AG04449 (cell line): ENCODE measurements at regions of chr5 and their contacts with region 1.

Region 1: GRCh38 chr5:144142139-144142823 is 28.2 kb downstream of the YIPF5 start:
- DNase-seq: no peak
- H3K4me3 ChIP-seq: no peak overlapping the region
- CTCF ChIP-seq: peak; percentile 60

Region 2: GRCh38 chr5:143824851-143825720 is 317.2 kb before region 1 on chr5:
- CTCF ChIA-PET with region 1: interaction called, 24 read pairs
- POLR2A ChIA-PET with region 1: no interaction called
- DNase-seq: no peak
- H3K4me3 ChIP-seq: no peak overlapping the region
- CTCF ChIP-seq: peak; percentile 96

Region 3: GRCh38 chr5:143968011-143968878 is 174.0 kb before region 1 on chr5:
- CTCF ChIA-PET with region 1: interaction called, 32 read pairs
- POLR2A ChIA-PET with region 1: no interaction called
- DNase-seq: no peak
- H3K4me3 ChIP-seq: no peak overlapping the region
- CTCF ChIP-seq: peak; percentile 38

Region 4: DNA sequence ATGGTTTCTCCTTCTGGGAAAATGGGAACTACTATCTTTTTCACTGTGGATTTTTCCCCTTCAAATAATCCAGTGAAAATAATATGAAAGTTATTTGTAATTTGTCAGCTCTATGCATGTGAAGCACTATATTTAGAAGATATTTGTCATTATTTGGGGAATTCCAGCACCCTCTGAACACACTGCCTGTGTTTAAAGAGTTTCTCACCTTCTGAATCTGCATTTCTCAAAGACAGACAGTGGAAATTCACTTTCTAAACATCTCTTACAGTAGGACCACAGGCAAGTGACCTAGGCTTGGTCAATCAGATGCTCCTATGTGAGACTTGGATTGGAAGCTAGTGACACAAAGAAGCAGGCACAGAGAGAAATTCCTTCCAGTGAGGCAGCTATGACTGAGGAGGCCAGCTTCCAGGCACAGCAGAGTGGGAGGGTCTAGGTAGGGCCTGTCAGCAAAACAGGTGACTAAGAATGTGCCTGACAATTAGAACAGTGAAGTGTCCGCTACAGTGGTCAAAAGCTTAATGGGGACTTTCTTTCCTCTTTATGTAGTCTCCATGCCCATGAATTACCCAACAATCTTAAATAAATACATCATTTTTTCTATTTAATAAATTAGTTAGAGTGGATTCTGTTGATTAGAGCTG is 163.1 kb before region 1 on chr5:
- CTCF ChIA-PET with region 1: interaction called, 15 read pairs
- POLR2A ChIA-PET with region 1: no interaction called
- DNase-seq: no peak
- H3K4me3 ChIP-seq: no peak overlapping the region
- CTCF ChIP-seq: no peak

Region 5: DNA sequence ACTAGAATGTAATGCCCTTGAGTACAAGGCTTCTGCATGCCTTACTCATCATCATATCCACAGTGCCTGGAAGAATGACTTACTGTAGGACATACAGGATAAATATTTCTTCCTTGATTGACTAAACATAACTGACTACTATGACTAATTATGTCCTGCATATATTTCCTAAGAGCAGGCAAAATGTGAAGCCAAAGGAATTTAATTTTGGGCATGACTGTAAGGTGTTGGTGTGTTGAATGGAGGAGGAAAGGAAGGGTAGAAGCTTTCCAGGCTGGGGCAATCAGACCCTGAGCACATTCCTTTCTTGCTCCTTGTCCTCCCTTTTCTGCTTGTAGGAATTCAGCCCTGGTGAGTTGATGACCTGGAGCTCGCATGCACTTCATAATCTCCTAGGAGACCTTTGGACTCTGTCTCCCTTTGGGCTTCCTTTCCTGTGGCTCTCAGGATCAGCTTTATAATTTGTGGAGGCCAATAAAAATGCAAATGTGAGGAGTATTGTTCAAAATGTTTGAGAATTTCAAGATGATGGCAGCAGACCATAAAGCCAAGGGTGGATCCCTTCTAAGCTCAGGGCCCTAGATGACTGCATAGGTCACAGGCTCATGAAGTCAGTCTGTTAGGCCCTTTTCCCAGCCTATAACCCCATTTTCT is 156.3 kb before region 1 on chr5:
- CTCF ChIA-PET with region 1: interaction called, 10 read pairs
- POLR2A ChIA-PET with region 1: interaction called, 3 read pairs
- DNase-seq: peak; percentile 34
- H3K4me3 ChIP-seq: no peak overlapping the region
- CTCF ChIP-seq: no peak

Region 6: GRCh38 chr5:144125163-144125726 is 17.0 kb before region 1 on chr5:
- CTCF ChIA-PET with region 1: interaction called, 36 read pairs
- POLR2A ChIA-PET with region 1: no interaction called
- DNase-seq: peak; percentile 33
- H3K4me3 ChIP-seq: no peak overlapping the region
- CTCF ChIP-seq: no peak

Region 7: GRCh38 chr5:144191998-144192397 is 49.7 kb after region 1 on chr5:
- CTCF ChIA-PET with region 1: no interaction called
- POLR2A ChIA-PET with region 1: no interaction called
- DNase-seq: no peak
- H3K4me3 ChIP-seq: no peak overlapping the region
- CTCF ChIP-seq: peak; percentile 45

Region 8: GRCh38 chr5:144203750-144204596 is 61.7 kb after region 1 on chr5:
- CTCF ChIA-PET with region 1: no interaction called
- POLR2A ChIA-PET with region 1: no interaction called
- DNase-seq: no peak
- H3K4me3 ChIP-seq: no peak overlapping the region
- CTCF ChIP-seq: peak; percentile 63